ENCODE measurements at regions of chr3 and their contacts with region 1.

Region 1: GRCh38 chr3:160343132-160343531 is 55.9 kb downstream of the IFT80 start:
- DNase-seq: no peak
- ATAC-seq: no peak
- H3K4me3 ChIP-seq: no peak overlapping the region
- H3K27ac ChIP-seq: no peak overlapping the region
- H3K4me1 ChIP-seq: no peaks in the 10 kb centered on the region
- H3K27me3 ChIP-seq: no peaks in the 10 kb centered on the region
- CTCF ChIP-seq: peak in 7 of 9 donors; percentile 32 to 62 (median 53)

Region 2: DNA sequence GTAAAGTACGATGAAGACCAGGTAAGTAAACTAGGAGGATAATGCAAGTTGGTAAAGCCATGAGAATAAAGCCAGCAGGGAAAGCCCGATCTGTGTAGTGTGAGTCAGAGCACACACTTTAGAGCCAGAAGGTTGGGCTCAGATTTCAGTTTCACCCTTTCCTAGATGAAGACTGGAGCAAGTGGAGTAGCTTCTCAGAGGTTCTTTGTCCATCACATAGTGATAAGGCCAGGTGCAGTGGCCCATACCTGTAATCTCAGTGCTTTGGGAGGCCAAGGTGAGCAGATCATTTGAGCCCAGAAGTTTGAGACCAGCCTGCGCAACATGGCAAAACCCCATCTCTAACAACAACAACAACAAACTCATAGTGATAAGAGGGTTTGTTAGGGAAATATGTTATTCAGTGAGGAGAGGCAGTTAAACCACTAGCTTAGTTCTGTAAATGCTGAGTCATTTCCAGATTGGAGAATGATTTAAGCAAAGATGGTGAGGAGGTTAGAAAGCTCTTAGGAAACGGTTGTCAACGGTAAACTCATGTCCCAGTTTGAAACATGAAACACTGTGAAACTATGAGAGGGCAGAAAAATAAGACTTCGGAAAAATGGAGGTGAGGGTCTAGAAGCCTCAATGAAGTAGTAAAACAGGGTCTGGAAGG is 315.5 kb before region 1 on chr3:
- intact Hi-C with region 1: loop called in 7 of 10 experiments (anchors 5 to 10 kb)
- DNase-seq: no peak
- ATAC-seq: no peak
- H3K4me3 ChIP-seq: no peak overlapping the region
- H3K27ac ChIP-seq: no peak overlapping the region
- H3K4me1 ChIP-seq: peaks cover 0 to 11% (median 0%) of the 10 kb centered on the region in 9 donors
- H3K27me3 ChIP-seq: peaks cover 0 to 2% (median 0%) of the 10 kb centered on the region in 7 donors
- CTCF ChIP-seq: no peak

Region 3: GRCh38 chr3:160038862-160039562 is 304.1 kb before region 1 on chr3:
- intact Hi-C with region 1: loop called in 8 of 10 experiments (anchors 5 to 10 kb)
- DNase-seq: peak in 1 of 2 donors; percentile 15
- ATAC-seq: peak; percentile 25 to 57 (median 40)
- H3K4me3 ChIP-seq: peak overlapping the region in 9 of 10 donors; percentile 11 to 48 (median 46)
- H3K27ac ChIP-seq: no peak overlapping the region
- H3K4me1 ChIP-seq: peaks cover 0 to 8% (median 3%) of the 10 kb centered on the region in 9 donors
- H3K27me3 ChIP-seq: peaks cover 0 to 48% (median 37%) of the 10 kb centered on the region in 7 donors
- CTCF ChIP-seq: no peak

Region 4: GRCh38 chr3:160163229-160163878 is 179.8 kb before region 1 on chr3:
- intact Hi-C with region 1: loop called in 9 of 10 experiments (anchors 2 to 5 kb)
- DNase-seq: no peak
- ATAC-seq: no peak
- H3K4me3 ChIP-seq: no peak overlapping the region
- H3K27ac ChIP-seq: no peak overlapping the region
- H3K4me1 ChIP-seq: no peaks in the 10 kb centered on the region
- H3K27me3 ChIP-seq: peaks cover 0 to 15% (median 0%) of the 10 kb centered on the region in 7 donors
- CTCF ChIP-seq: peak in 8 of 9 donors; percentile 16 to 68 (median 52)

Region 5: GRCh38 chr3:160225176-160226025 is 117.7 kb before region 1 on chr3 and contains the start of gene C3orf80:
- intact Hi-C with region 1: loop called in 1 of 10 experiments (anchors 5 kb)
- DNase-seq: peak; percentile 21 to 41
- ATAC-seq: peak; percentile 67 to 88 (median 78)
- H3K4me3 ChIP-seq: peak within 1 kb of the TSS; percentile 40 to 70 (median 60)
- H3K27ac ChIP-seq: peak within 1 kb of the TSS in 2 of 10 donors; percentile 5 to 47
- H3K4me1 ChIP-seq: peaks cover 0 to 25% (median 19%) of the 10 kb centered on the region in 9 donors
- H3K27me3 ChIP-seq: peaks cover 9 to 85% (median 50%) of the 10 kb centered on the region in 7 donors
- CTCF ChIP-seq: peak in 6 of 9 donors; percentile 8 to 52 (median 30)
- total RNA-seq, gene C3orf80: 0.09 to 0.70 (median 0.19) TPM in 8 of 10 donors, not detected in the others

Region 6: GRCh38 chr3:160427832-160428424 is 84.8 kb after region 1 on chr3:
- intact Hi-C with region 1: no loop called
- DNase-seq: no peak
- ATAC-seq: no peak
- H3K4me3 ChIP-seq: no peak overlapping the region
- H3K27ac ChIP-seq: no peak overlapping the region
- H3K4me1 ChIP-seq: no peaks in the 10 kb centered on the region
- H3K27me3 ChIP-seq: no peaks in the 10 kb centered on the region
- CTCF ChIP-seq: no peak

Measured in heart right ventricle (tissue), 16 donors.